Common myeloid progenitor, CD34-positive (primary cell): ENCODE measurements at regions of chr3 and their contacts with region 1.

Region 1: GRCh38 chr3:128584412-128585020 is 66.1 kb downstream of the RPN1 start:
- DNase-seq: peak; percentile 82 to 85 (median 83)
- H3K4me3 ChIP-seq: peak overlapping the region in 1 of 7 experiments; percentile 28
- H3K27ac ChIP-seq: no peak overlapping the region
- H3K4me1 ChIP-seq: peaks cover 0 to 36% (median 17%) of the 10 kb centered on the region in 4 experiments
- H3K27me3 ChIP-seq: no peaks in the 10 kb centered on the region

Region 2: DNA sequence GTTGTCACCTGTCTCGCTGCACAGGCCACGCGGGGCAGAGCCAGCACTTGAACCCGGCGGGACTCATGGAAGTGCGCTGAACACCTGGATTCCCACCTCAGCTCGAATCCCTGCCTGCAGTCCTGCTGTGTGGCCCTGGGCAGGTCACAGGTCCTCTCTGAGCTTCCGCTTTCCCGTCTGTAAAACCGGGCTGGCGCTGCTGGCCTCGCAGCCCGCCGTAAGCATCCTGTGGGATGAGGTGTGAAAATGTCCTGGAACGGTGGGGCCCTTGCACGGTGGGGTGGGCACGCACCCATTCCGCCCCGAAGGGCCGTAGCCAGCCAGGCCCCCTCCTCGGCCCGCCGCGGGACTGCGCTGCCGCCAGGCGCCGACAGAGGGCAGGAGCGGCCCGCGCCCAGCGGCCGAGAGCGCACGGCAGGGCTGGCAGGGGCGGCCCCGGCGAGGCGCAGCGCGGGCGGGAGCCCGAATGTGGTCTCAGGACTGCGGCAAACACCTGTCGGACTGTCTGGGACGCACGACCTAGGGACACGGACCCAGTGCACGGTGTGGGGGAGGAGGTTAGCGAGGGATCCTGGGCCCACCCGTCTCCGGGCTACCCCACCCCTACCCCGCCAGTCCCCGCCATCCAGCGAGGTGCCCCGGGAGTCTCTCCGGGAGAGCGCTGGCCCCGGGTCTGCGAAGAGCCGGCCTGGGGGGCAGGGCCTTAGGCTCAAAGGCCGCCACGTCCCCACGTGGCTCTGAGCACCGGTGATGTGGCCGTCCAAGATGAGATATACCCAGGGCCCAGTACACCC is 158.2 kb before region 1 on chr3:
- CTCF ChIA-PET with region 1: interaction called, 32 read pairs
- POLR2A ChIA-PET with region 1: no interaction called
- DNase-seq: peak; percentile 46 to 58 (median 57)
- H3K4me3 ChIP-seq: peak overlapping the region in 3 of 7 experiments; percentile 13 to 69 (median 56)
- H3K27ac ChIP-seq: no peak overlapping the region
- H3K4me1 ChIP-seq: peaks cover 0 to 14% (median 11%) of the 10 kb centered on the region in 4 experiments
- H3K27me3 ChIP-seq: peaks cover 0 to 7% (median 0%) of the 10 kb centered on the region in 5 experiments

Region 3: DNA sequence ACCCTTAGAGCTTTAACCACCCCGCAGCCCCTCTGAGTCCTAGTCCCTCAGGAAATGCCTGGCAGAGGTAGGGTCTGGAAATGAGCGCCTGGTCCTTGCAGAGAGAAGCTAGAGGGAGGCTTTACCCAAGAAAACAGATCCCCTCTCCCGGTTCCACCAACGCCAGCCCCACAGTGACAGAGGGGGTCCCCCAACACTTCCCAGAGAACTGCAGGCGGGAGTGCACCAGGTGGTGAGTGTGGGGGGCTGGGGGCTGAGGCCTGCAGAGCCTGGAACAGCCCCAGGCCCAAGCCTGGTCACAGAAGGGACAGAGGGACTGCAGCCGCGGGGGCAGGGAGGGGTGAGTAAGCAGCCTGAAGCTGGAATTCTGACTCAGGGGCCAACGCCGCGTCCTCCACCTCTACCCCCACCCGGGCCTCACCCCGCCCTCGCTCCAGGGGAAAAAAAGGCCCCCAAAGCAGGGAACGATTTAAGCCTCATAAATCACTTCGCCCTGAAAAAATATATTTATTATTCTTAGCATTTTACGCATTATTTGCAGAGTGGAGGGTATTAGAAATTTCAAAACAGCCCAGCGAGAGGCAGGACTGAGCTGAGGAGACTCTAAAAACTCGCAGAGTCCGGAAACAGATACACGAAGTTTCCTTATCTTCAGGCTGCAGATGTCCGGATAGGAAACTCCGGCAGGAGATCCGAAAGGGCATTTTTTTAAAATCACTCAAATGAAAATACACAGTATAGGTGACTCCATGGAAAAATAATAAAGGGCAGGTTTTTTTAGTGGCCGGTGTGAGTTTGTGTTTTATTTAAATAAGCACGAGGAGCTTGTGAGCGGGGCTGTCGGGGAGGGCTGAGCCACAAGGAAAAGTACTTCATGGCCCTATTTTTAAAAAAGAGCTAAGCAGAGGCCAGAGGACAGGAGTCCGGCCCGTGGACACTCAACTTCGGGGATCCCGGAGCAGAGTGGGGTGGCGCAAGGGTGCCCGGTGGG is 101.6 kb before region 1 on chr3:
- CTCF ChIA-PET with region 1: interaction called, 15 read pairs
- POLR2A ChIA-PET with region 1: interaction called, 3 read pairs
- DNase-seq: peak; percentile 98 to 99 (median 99)
- H3K4me3 ChIP-seq: peak overlapping the region in 6 of 7 experiments; percentile 54 to 98 (median 88)
- H3K27ac ChIP-seq: peak overlapping the region; percentile 83 to 93
- H3K4me1 ChIP-seq: peaks cover 6 to 74% (median 67%) of the 10 kb centered on the region in 4 experiments
- H3K27me3 ChIP-seq: no peaks in the 10 kb centered on the region

Region 4: GRCh38 chr3:128497387-128498126 is 87.0 kb before region 1 on chr3:
- CTCF ChIA-PET with region 1: interaction called, 24 read pairs
- POLR2A ChIA-PET with region 1: interaction called, 5 read pairs
- DNase-seq: peak; percentile 72 to 86 (median 83)
- H3K4me3 ChIP-seq: peak overlapping the region; percentile 33 to 82 (median 60)
- H3K27ac ChIP-seq: peak overlapping the region in 1 of 2 experiments; percentile 25
- H3K4me1 ChIP-seq: peaks cover 2 to 50% (median 30%) of the 10 kb centered on the region in 4 experiments
- H3K27me3 ChIP-seq: peaks cover 0 to 2% (median 0%) of the 10 kb centered on the region in 5 experiments

Region 5: GRCh38 chr3:128572644-128573105 is 11.8 kb before region 1 on chr3:
- CTCF ChIA-PET with region 1: interaction called, 18 read pairs
- POLR2A ChIA-PET with region 1: no interaction called
- DNase-seq: peak; percentile 54 to 82 (median 79)
- H3K4me3 ChIP-seq: peak overlapping the region in 1 of 7 experiments; percentile 12
- H3K27ac ChIP-seq: no peak overlapping the region
- H3K4me1 ChIP-seq: peaks cover 0 to 22% (median 20%) of the 10 kb centered on the region in 4 experiments
- H3K27me3 ChIP-seq: peaks cover 0 to 2% (median 0%) of the 10 kb centered on the region in 5 experiments

Region 6: GRCh38 chr3:128736601-128737000 is 152.1 kb after region 1 on chr3:
- CTCF ChIA-PET with region 1: no interaction called
- POLR2A ChIA-PET with region 1: no interaction called
- DNase-seq: no peak
- H3K4me3 ChIP-seq: no peak overlapping the region
- H3K27ac ChIP-seq: no peak overlapping the region
- H3K4me1 ChIP-seq: peaks cover 17 to 36% (median 24%) of the 10 kb centered on the region in 4 experiments
- H3K27me3 ChIP-seq: no peaks in the 10 kb centered on the region